Aorta (tissue), 5 donors: ENCODE measurements at regions of chr6 and their contacts with region 1.

Region 1: GRCh38 chr6:113457198-113457597 is 399.9 kb upstream of the MARCKS start:
- DNase-seq: peak; percentile 67 to 77
- ATAC-seq: peak; percentile 64
- H3K4me3 ChIP-seq: no peak overlapping the region
- H3K27ac ChIP-seq: no peak overlapping the region
- H3K4me1 ChIP-seq: no peaks in the 10 kb centered on the region
- H3K27me3 ChIP-seq: no peaks in the 10 kb centered on the region

Region 2: GRCh38 chr6:112956696-112957528 is 500.3 kb before region 1 on chr6:
- intact Hi-C with region 1: no loop called
- DNase-seq: no peak
- ATAC-seq: peak; percentile 65
- H3K4me3 ChIP-seq: no peak overlapping the region
- H3K27ac ChIP-seq: no peak overlapping the region
- H3K4me1 ChIP-seq: peaks cover 0 to 4% of the 10 kb centered on the region in 2 donors
- H3K27me3 ChIP-seq: no peaks in the 10 kb centered on the region

Region 3: GRCh38 chr6:113381959-113382358 is 75.2 kb before region 1 on chr6:
- intact Hi-C with region 1: no loop called
- DNase-seq: peak in 1 of 2 donors; percentile 49
- ATAC-seq: no peak
- H3K4me3 ChIP-seq: no peak overlapping the region
- H3K27ac ChIP-seq: no peak overlapping the region
- H3K4me1 ChIP-seq: no peaks in the 10 kb centered on the region
- H3K27me3 ChIP-seq: no peaks in the 10 kb centered on the region

Region 4: DNA sequence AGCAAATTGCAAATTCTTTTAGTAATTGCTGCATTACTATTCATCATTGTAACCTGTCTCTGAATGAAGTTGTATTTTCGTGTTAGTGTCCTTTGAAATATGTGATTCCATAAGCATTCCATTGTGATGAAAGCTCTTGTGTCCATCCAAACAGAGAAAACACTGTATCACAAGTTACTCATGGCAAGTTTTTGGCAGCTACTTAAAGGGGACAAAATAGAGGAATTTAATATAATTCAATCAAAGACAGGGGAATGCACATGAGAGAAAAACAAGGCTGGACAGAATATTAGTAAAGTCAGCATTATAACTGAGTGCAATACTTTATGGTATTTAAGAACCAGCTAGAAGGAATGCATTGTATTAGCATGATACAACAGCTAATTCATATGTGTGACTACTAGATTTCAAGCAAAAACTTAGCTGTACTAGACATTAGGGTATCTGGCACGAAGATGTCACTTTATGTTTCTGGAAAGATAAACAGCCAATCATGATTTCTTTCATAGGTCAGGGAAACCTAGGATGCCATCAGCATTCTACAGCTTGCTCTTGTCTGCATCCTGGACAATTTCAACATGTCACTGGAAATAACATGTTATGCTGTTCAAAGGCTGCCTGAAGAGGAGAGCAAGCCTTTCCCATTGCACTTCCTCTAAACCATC is 129.3 kb after region 1 on chr6:
- intact Hi-C with region 1: no loop called
- DNase-seq: no peak
- ATAC-seq: no peak
- H3K4me3 ChIP-seq: no peak overlapping the region
- H3K27ac ChIP-seq: no peak overlapping the region
- H3K4me1 ChIP-seq: no peaks in the 10 kb centered on the region
- H3K27me3 ChIP-seq: no peaks in the 10 kb centered on the region

Region 5: GRCh38 chr6:113684382-113684901 is 227.2 kb after region 1 on chr6:
- intact Hi-C with region 1: no loop called
- DNase-seq: no peak
- ATAC-seq: no peak
- H3K4me3 ChIP-seq: no peak overlapping the region
- H3K27ac ChIP-seq: no peak overlapping the region
- H3K4me1 ChIP-seq: no peaks in the 10 kb centered on the region
- H3K27me3 ChIP-seq: no peaks in the 10 kb centered on the region

Region 6: GRCh38 chr6:113723182-113723581 is 266.0 kb after region 1 on chr6:
- intact Hi-C with region 1: loop called in 1 of 2 experiments (anchors 10 kb)
- DNase-seq: no peak
- ATAC-seq: no peak
- H3K4me3 ChIP-seq: no peak overlapping the region
- H3K27ac ChIP-seq: no peak overlapping the region
- H3K4me1 ChIP-seq: no peaks in the 10 kb centered on the region
- H3K27me3 ChIP-seq: no peaks in the 10 kb centered on the region